BJ (cell line): ENCODE measurements at regions of chr15 and their contacts with region 1.

Region 1: GRCh38 chr15:43285609-43286037 is 18.9 kb upstream of the TGM5 start:
- DNase-seq: peak; percentile 19
- H3K4me3 ChIP-seq: no peak overlapping the region
- H3K27me3 ChIP-seq: peaks cover 8% of the 10 kb centered on the region
- CTCF ChIP-seq: peak; percentile 75

Region 2: DNA sequence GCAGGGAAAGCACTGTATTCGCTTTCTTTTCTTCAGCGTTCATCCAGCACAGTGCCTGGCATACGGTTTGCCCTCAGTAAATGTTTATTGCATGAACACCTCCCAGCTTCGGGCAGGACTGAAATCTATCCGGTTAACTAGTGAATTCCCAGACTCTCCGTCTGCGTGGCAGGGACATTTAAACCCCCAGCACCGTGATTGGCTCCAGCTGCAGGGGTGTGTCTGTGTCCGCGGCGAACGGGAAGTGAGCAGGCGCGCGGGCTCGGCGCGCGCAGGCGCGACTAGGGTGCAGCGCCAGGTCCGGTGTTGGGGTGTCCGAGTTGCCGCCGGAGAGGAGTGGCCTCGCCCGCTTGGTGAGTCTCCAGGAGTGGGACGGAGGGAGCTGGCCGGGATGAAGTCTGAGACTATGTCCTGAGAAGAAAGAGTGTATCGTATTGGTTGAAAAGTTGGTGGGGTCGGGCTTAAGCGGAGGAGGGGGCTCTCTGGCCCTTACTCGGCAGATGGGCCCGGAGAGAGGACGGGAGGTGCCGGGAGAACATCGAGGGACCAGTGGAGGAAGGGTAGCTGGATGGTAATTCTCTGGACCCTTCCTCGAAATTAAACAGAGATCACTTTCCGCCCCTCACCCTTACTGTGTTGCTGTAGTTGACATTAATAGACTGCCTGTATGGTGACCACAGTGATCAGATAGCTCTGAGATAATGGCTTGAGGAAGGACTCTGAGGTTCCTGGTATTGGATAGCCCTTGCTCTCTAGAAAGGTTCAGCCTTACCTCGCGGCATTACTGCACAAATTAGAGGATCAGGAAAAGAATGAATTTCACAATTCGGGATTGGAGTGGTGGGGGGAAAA is 790.0 kb before region 1 on chr15 and contains the start of gene SNAP23:
- CTCF ChIA-PET with region 1: no interaction called
- POLR2A ChIA-PET with region 1: no interaction called
- DNase-seq: peak; percentile 80
- H3K4me3 ChIP-seq: peak within 1 kb of the TSS; percentile 69
- H3K27me3 ChIP-seq: no peaks in the 10 kb centered on the region
- CTCF ChIP-seq: no peak
- polyA plus RNA-seq, gene SNAP23: 28.5 and 40.7 TPM in 2 replicates

Region 3: GRCh38 chr15:43185157-43186017 is 100.2 kb before region 1 on chr15 and contains the start of gene CCNDBP1:
- CTCF ChIA-PET with region 1: interaction called, 30 read pairs
- POLR2A ChIA-PET with region 1: no interaction called
- DNase-seq: peak; percentile 51
- H3K4me3 ChIP-seq: peak within 1 kb of the TSS; percentile 82
- H3K27me3 ChIP-seq: no peaks in the 10 kb centered on the region
- CTCF ChIP-seq: peak; percentile 64
- polyA plus RNA-seq, gene CCNDBP1: 76.5 and 86.5 TPM in 2 replicates

Region 4: DNA sequence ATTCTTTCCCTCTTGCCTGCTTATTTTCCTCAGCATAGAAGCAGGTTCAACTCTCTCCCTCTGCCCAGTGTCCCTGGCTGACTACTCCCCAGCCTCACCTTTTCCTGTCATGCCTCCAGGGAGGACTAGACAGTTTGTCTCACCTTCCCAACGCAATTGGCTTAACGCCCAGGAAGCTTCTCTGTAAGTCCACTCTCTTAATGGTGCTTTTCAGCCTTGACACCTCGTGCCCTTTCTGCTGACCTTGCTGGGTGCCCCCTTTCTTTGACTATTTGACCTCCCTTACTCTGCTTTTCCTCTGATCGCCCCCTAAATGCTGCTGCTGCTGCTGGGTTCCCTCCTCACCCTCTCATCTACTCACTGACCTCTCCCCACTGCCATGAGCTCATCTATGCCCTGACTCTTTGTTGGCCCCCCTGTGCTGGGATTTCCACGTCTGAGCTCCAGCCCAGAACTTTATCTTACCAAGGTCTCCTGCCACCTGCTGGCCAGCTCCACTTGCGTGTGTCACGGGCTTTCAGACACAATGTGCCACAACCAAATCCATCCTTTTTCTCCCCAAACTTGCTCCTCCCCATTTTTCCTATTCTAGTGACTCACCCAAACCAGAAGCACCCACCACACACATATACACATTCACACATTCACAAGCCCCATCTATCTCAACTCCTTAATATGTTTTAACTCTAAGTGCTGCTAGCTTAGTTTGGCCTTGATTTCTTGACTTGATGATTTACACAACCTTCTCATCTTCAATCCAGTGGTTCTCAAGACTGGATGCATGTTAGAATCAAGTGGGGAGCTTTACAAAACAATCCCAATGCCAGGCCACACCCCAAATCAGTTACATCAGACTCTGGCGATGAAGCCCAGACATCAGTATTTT is 81.4 kb before region 1 on chr15:
- CTCF ChIA-PET with region 1: interaction called, 35 read pairs
- POLR2A ChIA-PET with region 1: no interaction called
- DNase-seq: no peak
- H3K4me3 ChIP-seq: no peak overlapping the region
- H3K27me3 ChIP-seq: peaks cover 27% of the 10 kb centered on the region
- CTCF ChIP-seq: peak; percentile 77

Region 5: DNA sequence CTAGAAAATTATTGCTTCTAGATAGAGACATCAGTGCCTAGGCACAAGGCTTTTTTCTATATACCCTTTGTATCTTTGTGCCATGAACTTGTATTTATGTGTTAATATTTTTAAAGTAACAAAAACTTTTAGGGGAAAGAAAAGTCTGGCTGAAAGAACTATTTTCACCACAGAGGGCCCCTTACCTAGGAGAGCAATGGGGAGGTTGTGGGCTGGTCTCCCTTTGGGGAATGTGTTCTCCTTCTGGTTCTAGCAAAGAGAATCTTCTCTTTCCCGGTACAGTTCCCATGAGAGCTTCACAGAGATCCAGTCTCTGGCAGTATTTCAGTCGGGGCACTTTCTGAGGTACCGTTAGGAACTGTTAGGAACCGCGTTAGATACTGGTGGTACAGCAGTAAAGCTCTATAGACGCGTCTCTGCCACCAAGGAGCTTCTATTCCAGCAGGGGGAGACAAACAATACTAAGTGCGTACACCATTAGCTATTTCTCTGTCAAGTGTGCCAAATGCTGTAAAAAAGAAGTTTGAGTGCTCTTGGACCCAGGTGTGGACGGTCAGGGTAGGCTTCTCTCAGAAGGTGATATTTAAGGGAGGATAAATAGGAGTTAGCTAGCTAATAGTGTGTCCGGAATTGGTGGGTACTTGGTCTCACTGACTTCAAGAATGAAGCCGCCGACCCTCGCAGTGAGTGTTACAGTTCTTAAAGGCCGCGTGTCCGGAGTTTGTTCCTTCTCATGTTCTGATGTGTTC is 60.2 kb before region 1 on chr15:
- CTCF ChIA-PET with region 1: interaction called, 127 read pairs
- POLR2A ChIA-PET with region 1: no interaction called
- DNase-seq: no peak
- H3K4me3 ChIP-seq: no peak overlapping the region
- H3K27me3 ChIP-seq: peaks cover 6% of the 10 kb centered on the region
- CTCF ChIP-seq: peak; percentile 79

Region 6: DNA sequence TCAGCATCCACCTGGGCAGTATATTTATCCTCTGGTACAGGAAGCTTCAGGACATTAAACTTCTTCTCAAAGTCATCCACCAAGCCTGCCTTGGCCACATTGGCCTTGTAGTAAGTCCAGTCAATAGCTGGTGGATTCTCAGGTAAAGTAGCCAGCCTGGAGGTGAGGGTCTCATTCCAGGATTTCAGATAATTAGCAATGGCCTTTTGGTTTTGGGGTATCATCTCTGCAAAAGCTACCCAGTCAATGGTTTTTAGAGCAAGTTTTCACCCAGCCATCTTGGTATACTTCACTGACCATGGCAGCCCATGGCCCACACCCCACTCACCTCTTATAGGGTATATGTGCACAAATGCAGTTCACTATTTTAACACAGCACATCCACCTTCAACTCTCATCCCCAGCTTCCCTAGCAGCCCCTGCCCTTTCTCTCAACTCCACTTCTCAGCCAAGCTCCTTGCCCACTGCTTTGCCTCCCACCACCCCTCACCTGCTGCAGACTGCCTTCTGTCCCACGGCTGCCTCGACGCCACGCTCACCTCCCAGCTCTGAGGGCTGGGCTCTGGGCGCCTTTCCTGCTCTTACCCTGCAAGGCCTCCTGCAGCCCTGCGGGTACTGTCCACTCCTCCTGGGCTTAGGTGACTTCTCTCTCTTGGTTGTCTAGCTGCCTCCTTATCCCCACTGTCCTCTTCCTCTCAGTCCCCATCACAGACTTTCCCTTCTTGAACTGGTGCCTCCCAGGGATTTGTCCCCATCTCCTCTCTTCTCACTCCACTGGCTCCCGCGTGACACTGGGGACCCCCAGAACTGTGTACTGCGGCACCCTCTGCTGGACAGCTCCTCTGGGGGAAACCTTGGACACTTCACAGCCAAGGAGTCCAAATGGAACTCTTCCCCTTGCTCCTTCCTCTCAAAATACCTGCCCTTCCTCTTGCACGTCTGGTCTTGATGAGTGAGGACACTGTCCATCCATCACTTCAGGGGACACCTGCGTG is 17.2 kb before region 1 on chr15:
- CTCF ChIA-PET with region 1: interaction called, 35 read pairs
- POLR2A ChIA-PET with region 1: no interaction called
- DNase-seq: no peak
- H3K4me3 ChIP-seq: no peak overlapping the region
- H3K27me3 ChIP-seq: peaks cover 27% of the 10 kb centered on the region
- CTCF ChIP-seq: peak; percentile 26; the same call in 1 of the 2 replicates

Region 7: DNA sequence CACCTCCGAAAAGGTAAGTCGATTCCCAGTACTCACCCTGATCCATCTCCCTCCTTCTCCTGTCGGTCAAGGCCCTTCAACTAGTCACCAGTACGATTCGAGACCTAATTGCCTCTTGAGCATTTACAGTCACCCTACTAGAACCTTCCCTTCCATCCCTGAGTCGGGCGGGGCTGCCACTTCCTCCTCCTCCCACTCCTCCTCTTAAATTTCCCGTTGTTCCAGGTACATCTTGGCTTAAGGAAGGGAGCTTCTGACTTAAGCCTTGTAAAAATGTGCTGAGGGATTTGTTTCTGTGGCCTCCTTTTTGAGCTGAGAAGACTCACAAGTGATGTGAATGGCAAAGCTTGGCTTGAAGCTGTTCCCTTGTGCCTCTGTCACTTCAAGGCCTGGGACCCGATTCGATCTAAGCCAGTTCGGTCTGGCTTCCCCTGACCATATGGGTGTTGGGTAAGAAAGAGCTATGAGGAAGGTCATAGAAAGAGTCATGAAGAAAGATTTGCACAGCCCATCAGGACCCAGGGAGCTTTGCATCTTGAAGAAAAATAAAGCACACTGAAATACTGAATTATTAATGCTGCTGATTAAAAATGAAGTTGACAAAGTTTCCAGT is 16.7 kb after region 1 on chr15:
- CTCF ChIA-PET with region 1: interaction called, 17 read pairs
- POLR2A ChIA-PET with region 1: no interaction called
- DNase-seq: no peak
- H3K4me3 ChIP-seq: no peak within 1 kb of the TSS
- H3K27me3 ChIP-seq: peaks cover 15% of the 10 kb centered on the region
- CTCF ChIP-seq: no peak